ENCODE measurements at regions of chr1 and their contacts with region 1.

Region 1: GRCh38 chr1:201149400-201149799 is 4.9 kb downstream of the TMEM9 start:
- DNase-seq: peak in 3 of 4 donors; percentile 32 to 44 (median 32)
- ATAC-seq: no peak
- H3K4me3 ChIP-seq: no peak overlapping the region
- H3K27ac ChIP-seq: no peak overlapping the region
- H3K4me1 ChIP-seq: peaks cover 18% of the 10 kb centered on the region
- H3K27me3 ChIP-seq: no peaks in the 10 kb centered on the region
- CTCF ChIP-seq: peak in 6 of 7 experiments; percentile 24 to 65 (median 52)
- POLR2A ChIP-seq: no peak

Region 2: DNA sequence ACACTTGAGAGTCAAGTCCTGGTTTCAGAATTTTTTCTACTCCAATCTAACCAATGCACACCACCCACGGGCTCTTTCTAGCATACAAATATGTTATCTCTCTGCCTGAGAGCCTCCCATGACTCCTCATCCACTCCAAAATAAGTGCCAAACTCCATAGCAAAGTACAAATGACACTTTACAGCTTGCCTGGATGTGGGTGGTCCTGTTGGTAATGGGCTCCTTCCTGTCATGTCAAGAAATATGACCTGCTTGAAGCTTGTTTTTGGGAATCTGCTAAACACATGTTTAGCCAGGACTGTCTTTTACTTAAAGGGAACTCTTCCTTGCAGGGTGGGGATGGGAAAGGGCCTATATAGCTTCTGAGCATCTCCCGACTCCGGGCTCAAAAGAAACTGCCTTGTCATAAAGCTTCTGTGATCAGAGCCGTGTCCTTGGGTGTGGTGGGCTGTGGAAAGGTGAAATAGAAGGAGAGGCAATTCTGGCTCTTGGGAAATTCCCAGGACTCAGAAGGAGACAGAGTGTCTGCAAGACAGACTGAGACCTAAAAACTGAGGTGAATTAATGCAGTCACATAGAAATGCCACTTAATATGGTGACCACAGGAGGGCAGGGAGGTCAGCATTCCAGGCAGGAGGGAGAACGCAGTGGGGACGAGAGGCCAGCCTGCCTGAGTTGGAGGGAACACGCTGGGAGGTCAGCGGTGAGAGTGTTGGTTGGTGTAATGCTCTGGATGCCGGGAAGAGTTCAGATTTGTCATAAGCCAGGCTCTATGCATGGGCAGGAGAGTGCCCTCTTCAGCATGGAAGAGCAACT is 35.1 kb after region 1 on chr1:
- intact Hi-C with region 1: loop called (anchors 5 kb)
- DNase-seq: peak; percentile 46 to 73 (median 66)
- ATAC-seq: peak; percentile 97
- H3K4me3 ChIP-seq: no peak overlapping the region
- H3K27ac ChIP-seq: peak overlapping the region in 1 of 4 donors; percentile 42
- H3K4me1 ChIP-seq: no peaks in the 10 kb centered on the region
- H3K27me3 ChIP-seq: no peaks in the 10 kb centered on the region
- CTCF ChIP-seq: peak; percentile 36 to 81 (median 72)
- POLR2A ChIP-seq: no peak

Measured in body of pancreas (tissue), 4 donors.